ENCODE measurements at regions of chr16 and their contacts with region 1.

Region 1: GRCh38 chr16:22424161-22424937 is 49.9 kb upstream of the CDR2 start:
- DNase-seq: no peak
- ATAC-seq: no peak
- H3K4me3 ChIP-seq: no peak overlapping the region
- H3K4me3 Mint-ChIP-seq: no peak overlapping the region
- H3K27ac ChIP-seq: no peak overlapping the region
- H3K27ac Mint-ChIP-seq: peak overlapping the region; percentile 4
- H3K4me1 ChIP-seq: no peaks in the 10 kb centered on the region
- H3K4me1 Mint-ChIP-seq: peaks cover 5% of the 10 kb centered on the region
- H3K27me3 ChIP-seq: no peaks in the 10 kb centered on the region
- H3K27me3 Mint-ChIP-seq: no peaks in the 10 kb centered on the region
- CTCF ChIP-seq: no peak

Region 2: DNA sequence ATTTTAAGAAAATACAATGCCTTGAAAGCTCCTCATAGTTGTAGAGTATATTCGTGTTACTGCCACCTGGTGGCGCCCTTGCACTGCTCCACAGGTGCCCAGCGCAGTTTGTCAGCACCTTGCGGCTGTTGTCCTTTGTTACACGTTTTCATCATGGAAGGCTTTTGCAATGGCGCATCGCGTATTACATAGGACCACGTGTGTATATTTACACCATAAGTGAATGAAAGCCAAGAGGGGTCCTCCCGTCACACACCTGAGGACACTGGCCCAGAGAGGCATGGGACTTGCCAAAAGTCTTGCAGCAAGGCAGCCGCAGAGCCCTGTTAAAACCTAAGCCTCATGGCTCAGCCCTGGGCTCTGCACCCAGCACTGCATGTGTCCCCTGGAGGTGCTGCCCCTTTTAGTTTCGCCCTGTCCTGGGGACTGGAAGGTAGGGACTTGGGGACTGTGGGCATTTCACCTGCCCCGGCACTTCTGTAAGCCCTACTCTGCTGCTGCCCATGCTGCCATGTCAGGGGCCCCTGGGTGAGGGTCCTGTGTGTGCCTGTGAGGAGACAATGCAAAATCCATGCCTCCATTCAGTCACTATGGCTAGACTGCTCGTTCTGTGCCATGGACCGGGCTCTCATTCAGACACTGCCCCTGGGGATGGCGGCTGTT is 102.9 kb before region 1 on chr16:
- CTCF ChIA-PET with region 1: no interaction called
- POLR2A ChIA-PET with region 1: no interaction called
- intact Hi-C with region 1: loop called in 1 of 2 experiments (anchors 5 kb)
- DNase-seq: peak; percentile 54 to 89 (median 69)
- ATAC-seq: peak; percentile 81
- H3K4me3 ChIP-seq: no peak overlapping the region
- H3K4me3 Mint-ChIP-seq: no peak overlapping the region
- H3K27ac ChIP-seq: no peak overlapping the region
- H3K27ac Mint-ChIP-seq: peak overlapping the region; percentile 82
- H3K4me1 ChIP-seq: peaks cover 10% of the 10 kb centered on the region
- H3K4me1 Mint-ChIP-seq: peaks cover 11% of the 10 kb centered on the region
- H3K27me3 ChIP-seq: no peaks in the 10 kb centered on the region
- H3K27me3 Mint-ChIP-seq: no peaks in the 10 kb centered on the region
- CTCF ChIP-seq: peak; percentile 99